ENCODE measurements at regions of chr5 and their contacts with region 1.

Region 1: DNA sequence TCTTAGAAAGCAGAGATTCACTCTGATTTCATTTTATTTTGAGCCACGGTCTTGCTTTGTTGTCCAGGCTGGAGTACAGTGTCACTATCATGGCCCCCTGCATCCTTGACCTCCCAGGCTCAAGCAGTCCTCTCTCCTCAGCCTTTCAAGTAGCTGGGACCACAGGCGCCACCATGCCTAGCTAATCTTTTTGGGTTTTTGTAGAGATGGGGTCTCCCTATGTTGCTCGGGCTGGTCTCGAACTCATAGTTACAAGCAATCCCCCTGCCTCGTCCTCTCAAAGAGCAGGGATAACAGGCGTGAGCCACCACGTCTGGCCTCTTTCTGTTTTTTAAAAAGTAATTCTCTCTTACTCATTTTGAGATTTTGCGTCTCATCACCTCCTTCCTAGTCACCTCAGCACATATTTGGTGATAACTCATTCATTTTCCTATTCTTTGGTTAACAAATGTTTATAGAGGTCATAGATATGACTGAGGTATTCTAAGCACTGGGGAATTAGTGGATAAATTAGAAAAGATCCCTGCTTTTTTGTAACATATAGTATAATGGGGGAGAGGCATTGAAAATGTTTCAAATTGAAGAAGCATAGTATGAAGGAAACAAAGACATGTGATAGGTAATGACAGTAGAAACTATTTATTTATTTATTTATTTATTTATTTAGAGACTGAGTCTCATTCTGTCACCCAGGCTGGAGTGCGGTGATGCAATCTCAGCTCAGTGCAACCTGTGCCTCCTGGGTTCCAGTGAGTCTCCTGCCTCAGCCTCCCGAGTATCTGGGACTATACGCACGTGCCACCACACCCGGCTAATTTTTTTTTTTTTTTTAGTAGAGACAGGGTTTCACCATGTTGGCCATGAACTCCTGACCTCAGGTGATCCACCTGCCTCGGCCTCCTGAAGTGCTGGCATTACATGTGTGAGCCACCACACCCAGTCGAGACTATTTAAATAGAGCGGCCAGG is 10.6 kb upstream of the DCP2 start:
- DNase-seq: no peak
- H3K4me3 ChIP-seq: no peak overlapping the region
- CTCF ChIP-seq: no peak

Region 2: GRCh38 chr5:112976432-112977309 is 10.7 kb after region 1 on chr5 and contains the start of gene DCP2:
- CTCF ChIA-PET with region 1: interaction called, 37 read pairs
- POLR2A ChIA-PET with region 1: no interaction called
- DNase-seq: peak; percentile 97
- H3K4me3 ChIP-seq: peak within 1 kb of the TSS; percentile 85
- CTCF ChIP-seq: no peak

Measured in AG04449 (cell line).